Tibial artery (tissue), 4 donors: ENCODE measurements at regions of chr6 and their contacts with region 1.

Region 1: DNA sequence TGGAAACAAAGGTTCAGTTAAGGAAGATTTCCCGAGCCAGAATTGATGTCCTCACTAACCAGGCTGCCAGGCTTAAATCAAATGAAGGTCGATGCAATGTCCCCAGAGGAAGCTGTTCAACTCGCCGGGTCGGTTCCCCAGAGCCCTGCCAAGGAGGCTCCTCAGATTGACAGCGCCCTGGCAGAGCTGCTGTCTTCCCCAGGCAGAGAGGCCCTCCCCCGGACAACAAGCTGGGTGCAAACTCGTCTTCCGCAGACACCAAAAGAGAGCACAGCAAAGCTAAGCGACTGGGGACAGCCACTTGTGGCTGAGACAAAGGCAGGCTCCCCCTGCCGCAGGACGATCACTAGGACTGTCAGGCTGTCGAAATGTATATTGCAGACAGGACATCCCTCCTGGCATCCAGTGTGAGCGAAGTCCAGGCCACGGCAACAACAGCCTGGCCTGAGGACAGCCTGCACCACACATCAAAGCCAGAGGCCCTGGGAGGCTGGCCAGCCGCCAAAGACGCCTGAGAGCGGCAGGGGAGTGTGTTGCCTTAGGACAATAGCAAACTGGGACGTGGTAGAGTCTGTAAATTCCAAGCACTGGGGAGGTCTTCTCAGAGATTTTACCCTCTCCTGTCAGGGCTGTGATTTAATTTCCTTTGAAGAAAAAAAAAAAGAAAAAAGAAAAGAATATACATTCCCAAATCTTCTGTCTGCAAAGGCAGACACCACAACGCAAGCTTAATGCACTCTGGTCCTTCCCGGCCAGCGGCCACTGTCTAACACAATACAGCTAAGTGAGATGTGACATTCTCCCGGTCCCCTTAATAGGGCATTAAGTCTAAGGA is 99.1 kb downstream of the HIVEP2 start:
- DNase-seq: peak; percentile 81 to 87
- H3K4me3 ChIP-seq: peak overlapping the region; percentile 32 to 43
- H3K27ac ChIP-seq: peak overlapping the region; percentile 62 to 72
- H3K4me1 ChIP-seq: peaks cover 0 to 87% (median 41%) of the 10 kb centered on the region in 4 donors
- H3K27me3 ChIP-seq: no peaks in the 10 kb centered on the region
- CTCF ChIP-seq: no peak

Region 2: GRCh38 chr6:142374965-142375733 is 470.7 kb before region 1 on chr6:
- intact Hi-C with region 1: no loop called
- DNase-seq: no peak
- H3K4me3 ChIP-seq: no peak overlapping the region
- H3K27ac ChIP-seq: no peak overlapping the region
- H3K4me1 ChIP-seq: no peaks in the 10 kb centered on the region
- H3K27me3 ChIP-seq: no peaks in the 10 kb centered on the region
- CTCF ChIP-seq: no peak

Region 3: GRCh38 chr6:142885182-142885867 is 39.5 kb after region 1 on chr6:
- intact Hi-C with region 1: loop called (anchors 5 kb)
- DNase-seq: no peak
- H3K4me3 ChIP-seq: peak overlapping the region; percentile 48 to 52
- H3K27ac ChIP-seq: peak overlapping the region; percentile 56 to 74
- H3K4me1 ChIP-seq: peaks cover 0 to 56% (median 14%) of the 10 kb centered on the region in 4 donors
- H3K27me3 ChIP-seq: no peaks in the 10 kb centered on the region
- CTCF ChIP-seq: no peak